ENCODE measurements at regions of chr9 and their contacts with region 1.

Region 1: DNA sequence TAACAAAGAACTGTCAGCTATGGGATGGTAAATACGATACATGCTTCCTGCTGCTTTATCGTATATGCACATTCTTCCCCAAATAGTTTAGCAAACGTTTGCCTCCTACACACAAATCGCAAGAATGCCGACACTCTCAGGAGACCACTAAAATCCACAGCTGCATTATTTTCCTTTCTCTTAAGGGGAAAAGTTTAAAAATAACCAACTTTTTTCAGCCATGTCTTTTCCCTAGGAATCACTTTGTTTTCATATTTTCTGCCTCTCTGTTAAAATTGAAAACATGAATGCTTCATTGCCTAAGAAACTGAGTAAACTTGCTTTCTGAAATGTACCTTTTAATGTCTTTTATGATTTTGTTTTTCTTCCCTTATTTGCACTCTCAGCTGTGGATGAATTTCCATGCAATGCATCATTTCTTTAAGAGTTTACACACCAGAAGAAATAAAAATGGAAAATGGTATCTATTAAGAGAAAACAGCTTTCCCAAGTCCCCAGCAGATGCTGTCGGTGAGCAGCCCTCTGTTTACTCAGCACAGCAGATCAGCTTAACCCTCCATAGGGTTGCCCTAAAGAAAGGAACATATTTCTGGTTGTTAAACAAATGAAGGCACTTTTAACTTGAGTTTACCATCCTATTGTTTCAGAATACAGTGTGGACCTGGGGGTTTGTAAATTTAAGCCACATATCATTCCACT is 66.2 kb downstream of the IZUMO3 start:
- DNase-seq: no peak
- H3K4me3 Mint-ChIP-seq: no peak overlapping the region
- H3K27ac Mint-ChIP-seq: no peak overlapping the region
- H3K4me1 Mint-ChIP-seq: no peaks in the 10 kb centered on the region
- H3K27me3 Mint-ChIP-seq: no peaks in the 10 kb centered on the region

Region 2: DNA sequence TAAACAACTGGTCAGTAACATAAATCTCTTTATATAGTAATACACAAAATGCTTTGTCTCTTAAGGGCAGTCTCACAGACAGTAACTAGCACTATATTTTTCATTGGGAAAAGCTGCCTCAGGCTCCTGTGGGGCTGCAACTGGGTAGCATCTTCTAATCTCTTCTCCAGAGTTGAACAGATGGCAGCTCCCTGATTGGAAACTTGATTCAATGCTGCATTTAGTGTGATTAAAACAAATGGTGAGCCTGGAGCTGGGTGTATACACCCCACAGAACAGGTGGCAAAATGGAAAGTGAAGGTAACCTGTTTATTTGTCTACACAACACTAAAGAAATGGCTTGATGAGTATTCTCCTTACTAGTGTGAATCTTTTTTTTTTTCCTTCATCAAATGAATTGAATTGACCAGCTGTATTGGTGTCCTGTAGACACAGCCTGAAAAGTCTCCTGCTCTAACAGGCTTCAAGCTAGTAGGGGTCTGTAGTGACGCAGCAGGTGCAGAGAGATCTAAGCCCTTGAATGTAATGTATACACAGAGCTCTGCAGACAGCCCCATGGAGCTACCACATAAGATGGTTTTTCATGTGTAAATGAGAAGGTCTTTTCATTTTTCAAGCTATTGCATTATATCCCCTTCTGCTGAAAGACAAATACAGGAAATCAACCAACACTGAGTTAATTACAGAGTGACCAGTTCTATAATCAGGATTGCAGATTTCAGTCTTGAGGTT is 22.9 kb after region 1 on chr9:
- intact Hi-C with region 1: loop called (anchors 2 kb)
- DNase-seq: no peak
- H3K4me3 Mint-ChIP-seq: no peak overlapping the region
- H3K27ac Mint-ChIP-seq: no peak overlapping the region
- H3K4me1 Mint-ChIP-seq: no peaks in the 10 kb centered on the region
- H3K27me3 Mint-ChIP-seq: no peaks in the 10 kb centered on the region

Region 3: GRCh38 chr9:24552526-24553182 is 73.1 kb after region 1 on chr9:
- intact Hi-C with region 1: no loop called
- DNase-seq: no peak
- H3K4me3 Mint-ChIP-seq: no peak overlapping the region
- H3K27ac Mint-ChIP-seq: no peak overlapping the region
- H3K4me1 Mint-ChIP-seq: no peaks in the 10 kb centered on the region
- H3K27me3 Mint-ChIP-seq: no peaks in the 10 kb centered on the region

Region 4: GRCh38 chr9:24602693-24603352 is 123.3 kb after region 1 on chr9:
- intact Hi-C with region 1: no loop called
- DNase-seq: no peak
- H3K4me3 Mint-ChIP-seq: no peak overlapping the region
- H3K27ac Mint-ChIP-seq: no peak overlapping the region
- H3K4me1 Mint-ChIP-seq: no peaks in the 10 kb centered on the region
- H3K27me3 Mint-ChIP-seq: no peaks in the 10 kb centered on the region

Measured in activated CD4-positive, alpha-beta T cell treated with anti-CD3 and anti-CD28 coated beads, Interleukin-2, amount 10 ng/mL, durations not matched to agents 24 days and 14 days (primary cell).